GM10248 (cell line): ENCODE measurements at regions of chr15 and their contacts with region 1.

Region 1: DNA sequence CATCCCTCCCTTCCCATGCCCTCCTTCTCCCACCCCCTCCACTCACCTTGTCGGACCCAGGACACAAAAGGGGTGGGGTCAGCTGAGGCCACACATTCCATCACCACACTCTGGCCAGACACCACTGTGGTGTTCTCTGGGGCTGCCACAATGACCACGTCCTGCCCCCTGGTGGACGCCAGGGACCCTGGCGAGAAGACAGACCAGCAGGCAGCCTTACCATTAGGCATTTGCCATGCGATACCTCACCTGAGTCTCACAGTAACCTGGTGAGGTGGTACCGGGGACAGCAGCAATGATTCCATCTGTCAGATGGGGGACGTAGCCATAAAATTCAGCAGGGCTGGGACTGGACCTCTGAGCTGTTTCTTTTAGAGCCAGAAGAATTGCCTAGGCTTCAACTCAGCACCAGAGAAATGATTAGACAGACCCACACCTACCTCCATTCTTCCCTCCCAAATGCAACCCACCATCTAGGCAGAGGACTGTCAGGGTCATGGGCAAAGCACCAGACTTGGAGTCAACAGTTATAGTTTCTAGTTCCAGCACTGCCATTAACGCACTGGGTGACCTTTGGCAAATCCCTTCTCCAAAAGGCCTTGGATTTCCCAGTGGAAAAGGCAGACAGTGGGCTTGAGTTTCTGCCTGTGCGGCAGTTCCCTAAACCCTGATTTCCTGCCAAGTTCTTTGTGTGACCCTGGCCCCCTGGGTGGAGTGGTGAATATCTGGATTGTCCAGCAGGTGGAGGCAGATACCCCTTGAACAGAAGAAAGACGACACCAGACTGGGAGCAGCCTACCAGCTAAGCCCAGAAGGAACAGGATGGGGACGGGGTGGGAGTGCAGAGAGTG is 21.8 kb downstream of the IGDCC4 start:
- DNase-seq: peak; percentile 85
- CTCF ChIP-seq: peak; percentile 91

Region 2: DNA sequence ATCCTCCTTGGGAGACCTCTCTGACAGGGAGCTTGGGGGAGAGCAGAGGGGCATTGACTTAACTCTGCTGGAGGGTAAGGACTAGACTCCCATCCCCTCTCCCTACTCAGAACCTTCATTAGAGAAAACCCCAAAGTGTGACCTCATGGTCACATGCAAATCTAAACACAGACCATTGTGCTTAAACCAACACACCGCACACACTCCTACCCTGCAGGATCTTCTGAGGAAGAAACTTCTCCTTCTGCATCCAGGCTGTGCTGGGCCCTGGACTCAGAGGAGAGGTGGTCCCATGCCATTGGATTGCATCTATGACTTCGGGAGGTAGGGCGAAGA is 113.5 kb before region 1 on chr15:
- CTCF ChIA-PET with region 1: no interaction called
- POLR2A ChIA-PET with region 1: no interaction called
- DNase-seq: peak; percentile 25
- CTCF ChIP-seq: no peak

Region 3: DNA sequence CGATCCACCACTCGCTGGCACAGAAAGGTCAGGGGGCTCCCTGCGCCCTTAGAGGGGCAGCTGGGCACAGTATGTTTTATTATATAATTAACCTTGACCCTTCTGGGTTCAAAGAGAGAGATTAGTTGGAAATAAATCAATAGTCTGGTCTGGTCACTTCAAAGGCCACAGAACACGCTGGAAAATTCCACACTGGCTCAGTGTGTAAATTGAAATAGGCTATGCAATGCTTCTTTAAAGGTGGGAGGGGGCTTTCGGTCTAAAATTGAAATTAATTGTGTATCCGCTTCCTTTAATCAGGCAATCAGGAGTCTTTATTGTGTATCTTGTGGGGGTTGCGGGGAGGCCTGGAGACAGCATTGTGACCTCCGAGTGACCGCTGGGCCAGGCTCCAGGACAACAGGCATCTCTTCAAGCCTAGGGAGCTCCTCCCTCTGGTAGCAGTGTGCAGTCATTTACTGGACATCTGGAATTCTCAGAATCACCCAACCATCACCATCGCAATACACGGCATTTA is 88.5 kb before region 1 on chr15:
- CTCF ChIA-PET with region 1: interaction called, 47 read pairs
- POLR2A ChIA-PET with region 1: no interaction called
- DNase-seq: no peak
- CTCF ChIP-seq: no peak

Region 4: GRCh38 chr15:65318870-65319356 is 82.1 kb before region 1 on chr15:
- CTCF ChIA-PET with region 1: interaction called, 47 read pairs
- POLR2A ChIA-PET with region 1: no interaction called
- DNase-seq: peak; percentile 89
- CTCF ChIP-seq: peak; percentile 86

Region 5: DNA sequence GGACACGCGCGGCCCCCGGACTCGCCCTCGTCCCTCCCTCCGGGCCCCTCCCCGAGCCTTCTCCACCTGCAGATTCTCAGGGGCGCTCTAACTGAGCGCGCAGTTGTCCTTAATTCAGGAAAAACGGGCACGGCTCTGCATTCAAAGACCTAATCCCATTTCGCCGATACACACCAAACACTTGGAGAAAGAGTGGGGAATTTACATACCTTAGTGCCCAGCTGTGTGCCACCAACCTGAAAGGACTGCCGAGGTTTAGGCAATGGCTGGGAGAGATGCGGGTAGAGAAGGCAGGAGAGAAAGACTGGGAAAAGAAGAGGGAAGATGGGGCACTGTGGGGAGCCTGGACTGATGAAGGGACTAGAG is 45.0 kb before region 1 on chr15:
- CTCF ChIA-PET with region 1: no interaction called
- POLR2A ChIA-PET with region 1: no interaction called
- DNase-seq: no peak
- CTCF ChIP-seq: no peak

Region 6: DNA sequence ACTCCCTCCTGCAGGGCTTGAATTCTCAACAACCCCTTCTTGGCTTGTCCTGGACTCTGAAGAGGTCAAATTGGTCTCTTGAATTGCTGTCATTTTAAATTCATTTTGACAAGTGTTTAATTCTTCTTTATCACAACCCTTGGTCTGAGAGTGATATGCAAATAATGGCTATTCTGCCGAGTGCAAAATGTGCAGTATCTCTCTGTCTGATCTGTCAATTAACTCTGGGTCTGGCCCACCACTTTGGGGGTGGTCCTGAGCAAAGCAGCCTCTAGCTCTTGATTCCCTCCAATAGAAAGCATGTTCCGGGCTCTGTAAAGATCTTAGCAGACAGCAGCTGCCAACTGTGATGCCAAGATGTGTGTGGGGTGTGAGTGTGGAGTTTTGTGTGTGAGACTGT is 21.0 kb before region 1 on chr15:
- CTCF ChIA-PET with region 1: interaction called, 96 read pairs
- POLR2A ChIA-PET with region 1: no interaction called
- DNase-seq: no peak
- CTCF ChIP-seq: no peak

Region 7: GRCh38 chr15:65421360-65422070 is 20.5 kb after region 1 on chr15:
- CTCF ChIA-PET with region 1: interaction called, 156 read pairs
- POLR2A ChIA-PET with region 1: no interaction called
- DNase-seq: peak; percentile 76
- CTCF ChIP-seq: no peak

Region 8: DNA sequence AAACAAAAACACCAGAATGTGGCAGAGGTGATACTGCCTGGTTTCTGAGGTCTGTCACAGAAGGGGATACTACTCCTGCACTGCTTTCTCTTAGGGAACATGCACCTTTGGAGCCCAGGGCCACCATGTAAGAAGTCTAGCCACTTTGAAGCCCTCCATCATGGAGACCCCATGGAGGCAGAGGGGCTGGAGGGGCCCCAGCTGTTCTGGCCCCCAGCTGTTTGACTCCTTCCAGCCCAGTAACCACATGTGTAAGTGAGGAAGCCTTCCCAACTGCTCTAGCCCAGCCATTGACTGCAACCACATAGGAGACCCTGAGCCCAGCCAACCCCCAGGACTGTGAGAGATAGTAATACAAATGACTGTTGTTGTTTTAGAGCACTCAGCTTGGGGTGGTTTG is 30.7 kb after region 1 on chr15:
- CTCF ChIA-PET with region 1: interaction called, 10 read pairs
- POLR2A ChIA-PET with region 1: no interaction called
- DNase-seq: no peak
- CTCF ChIP-seq: no peak